ENCODE measurements at regions of chr11 and their contacts with region 1.

Region 1: DNA sequence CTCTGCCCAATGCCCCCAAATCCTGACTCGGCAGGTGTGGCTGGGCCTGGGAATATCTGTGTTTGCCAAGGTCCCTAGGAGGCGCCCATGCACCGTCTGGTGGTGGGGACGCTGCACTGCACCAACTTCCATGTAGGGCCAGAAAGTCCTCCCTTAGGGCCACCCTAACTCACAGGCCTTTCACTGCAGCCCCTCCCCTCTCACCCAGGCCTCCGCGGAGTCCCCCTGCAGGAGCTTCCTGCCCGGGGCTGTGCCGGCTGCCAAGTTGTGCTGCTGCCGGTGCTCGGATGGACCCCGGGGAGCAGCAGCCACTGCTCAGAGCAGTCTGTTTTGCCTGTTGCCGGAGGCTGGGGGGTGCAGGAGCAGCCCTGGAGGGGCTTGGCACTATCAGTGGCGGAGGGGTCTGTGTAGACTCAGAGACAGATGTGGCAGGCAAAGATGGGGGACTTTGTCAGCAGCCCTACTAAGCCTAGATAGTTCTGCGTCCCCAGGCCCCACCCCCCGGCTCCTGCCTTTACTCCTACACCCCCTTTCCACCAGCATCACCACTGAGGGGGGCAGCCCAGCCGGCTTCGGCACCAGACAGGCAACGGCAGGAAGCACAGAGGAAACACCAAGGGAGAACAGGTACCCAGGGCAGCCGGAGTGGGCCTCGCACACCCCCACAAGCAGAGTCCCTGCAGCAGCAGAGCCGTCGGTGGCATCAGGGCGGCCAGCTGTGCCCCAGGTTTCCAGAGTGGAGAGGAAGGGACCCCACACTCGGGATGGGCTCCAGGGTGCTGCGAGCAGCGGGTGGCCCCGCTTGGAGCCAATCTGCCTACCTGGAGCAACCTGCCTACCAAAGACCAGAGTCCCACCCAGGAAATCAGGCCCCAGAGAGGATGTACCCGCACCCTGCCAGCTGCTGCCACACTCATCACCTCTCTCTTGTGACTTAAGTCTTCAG is 124.3 kb downstream of the TRIM29 start:
- DNase-seq: no peak
- ATAC-seq: peak; percentile 48
- H3K4me3 ChIP-seq: no peak overlapping the region
- H3K27ac ChIP-seq: no peak overlapping the region
- H3K4me1 ChIP-seq: no peaks in the 10 kb centered on the region
- H3K27me3 ChIP-seq: no peaks in the 10 kb centered on the region

Region 2: DNA sequence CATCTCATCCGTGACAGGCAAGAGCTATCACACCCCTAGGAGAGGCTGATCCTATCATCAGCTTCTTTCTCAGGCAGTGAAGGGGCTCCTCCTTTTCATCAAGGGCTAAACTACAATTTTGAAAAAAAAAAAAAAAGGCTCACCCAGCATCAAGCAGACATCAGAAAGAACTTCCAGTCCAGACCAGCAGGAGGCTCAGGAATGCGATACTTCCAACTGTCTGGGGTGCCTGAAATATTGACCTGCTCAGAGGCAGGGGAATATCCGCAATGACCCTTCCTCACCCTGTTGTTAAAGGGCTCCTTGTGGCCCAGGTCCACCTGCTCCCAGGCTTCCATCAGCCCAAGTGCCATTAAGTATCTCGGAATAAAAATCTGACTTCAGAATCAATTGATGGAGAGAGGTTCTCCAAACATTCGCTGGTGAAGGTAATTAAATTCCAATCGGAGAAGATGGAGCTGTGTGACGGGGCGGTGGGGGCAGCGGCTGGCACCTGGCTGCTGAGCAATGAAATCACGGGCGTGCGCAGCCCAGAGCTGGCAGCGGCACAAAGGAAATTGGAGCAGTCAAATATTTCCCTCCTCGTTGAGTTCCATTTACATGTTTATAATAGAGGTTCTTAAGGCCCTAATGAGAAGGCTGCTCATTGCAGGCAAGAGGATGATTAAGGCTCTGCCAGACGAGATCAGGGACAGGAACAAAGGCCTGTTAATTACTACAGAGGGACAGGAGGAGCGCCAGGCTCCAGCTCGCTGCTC is 521.7 kb before region 1 on chr11:
- intact Hi-C with region 1: no loop called
- DNase-seq: peak in 1 of 2 donors; percentile 15
- ATAC-seq: no peak
- H3K4me3 ChIP-seq: no peak overlapping the region
- H3K27ac ChIP-seq: no peak overlapping the region
- H3K4me1 ChIP-seq: no peaks in the 10 kb centered on the region
- H3K27me3 ChIP-seq: no peaks in the 10 kb centered on the region

Region 3: DNA sequence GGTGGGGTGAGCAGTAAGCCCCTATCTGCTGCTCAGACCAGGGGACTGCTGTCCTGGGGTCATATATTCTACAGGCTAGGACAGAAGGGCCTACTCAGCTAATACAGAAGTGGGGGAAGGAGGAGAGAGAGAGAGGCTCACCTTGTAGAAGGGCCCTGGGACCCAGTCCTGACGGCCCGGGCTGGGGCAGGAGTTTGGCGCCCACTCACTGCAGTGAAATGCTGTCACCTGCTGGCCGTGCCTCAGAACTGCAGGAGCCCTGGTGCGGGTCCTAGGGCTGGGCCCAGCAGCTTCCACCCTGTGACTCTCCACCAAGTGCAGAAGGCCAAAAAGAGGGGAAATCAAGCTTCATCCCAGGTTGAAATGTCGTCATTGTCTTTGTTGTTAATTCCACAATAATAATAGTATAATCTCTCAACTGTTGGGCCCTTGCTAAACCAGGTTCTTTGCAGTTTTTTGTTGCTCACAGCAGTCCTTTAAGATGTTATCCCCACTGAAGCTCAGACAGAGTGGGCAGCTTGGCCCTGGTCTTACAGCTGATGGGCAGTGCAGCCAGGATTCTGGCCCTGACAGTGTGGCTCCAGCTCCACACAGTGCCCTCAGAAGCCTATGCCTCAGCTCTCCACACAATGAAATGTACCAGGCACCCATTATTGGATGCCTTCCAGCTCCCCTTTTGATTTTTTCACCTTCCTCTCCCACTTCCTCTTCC is 94.7 kb after region 1 on chr11:
- intact Hi-C with region 1: loop called in 1 of 2 experiments (anchors 2 kb)
- DNase-seq: peak; percentile 72 to 91
- ATAC-seq: peak; percentile 84
- H3K4me3 ChIP-seq: no peak overlapping the region
- H3K27ac ChIP-seq: no peak overlapping the region
- H3K4me1 ChIP-seq: no peaks in the 10 kb centered on the region
- H3K27me3 ChIP-seq: no peaks in the 10 kb centered on the region